CD8-positive, alpha-beta T cell (primary cell): ENCODE measurements at regions of chr2 and their contacts with region 1.

Region 1: DNA sequence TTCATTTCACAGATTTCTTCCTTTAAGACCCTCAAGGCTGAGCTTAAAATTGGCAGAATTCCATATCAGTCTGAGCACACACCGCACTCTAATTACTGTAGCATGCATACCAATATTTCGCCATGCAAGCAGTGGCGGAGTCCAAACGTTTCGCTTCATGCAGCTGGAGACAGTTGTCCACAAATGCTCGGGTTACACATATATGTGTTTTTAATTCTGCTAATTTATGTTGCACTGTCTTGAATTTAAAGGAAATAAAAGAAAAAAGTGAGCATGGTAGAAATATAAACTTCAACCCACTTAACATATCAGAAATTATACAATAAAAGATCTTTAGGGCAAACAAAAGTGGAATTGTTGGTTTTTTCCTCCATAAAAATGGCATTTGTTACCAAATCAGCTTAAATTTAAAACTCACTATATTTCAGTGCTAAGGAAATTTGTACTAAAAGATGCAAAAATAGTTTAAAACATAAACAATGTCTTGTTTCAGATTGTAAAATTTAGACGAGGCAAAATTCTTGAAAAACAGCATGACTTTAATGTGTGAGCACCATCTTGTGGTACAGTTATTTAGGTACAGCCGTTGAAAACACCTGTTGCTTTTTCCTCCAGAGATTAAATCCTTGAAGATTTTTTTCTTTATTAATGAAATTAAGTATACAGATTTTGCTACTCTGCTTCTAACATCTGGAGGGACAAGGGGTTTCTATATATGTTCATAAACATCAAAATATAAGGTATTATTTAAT is 24.1 kb upstream of the KANSL1L start:
- DNase-seq: peak in 2 of 9 experiments; percentile 62 to 71
- ATAC-seq: peak; percentile 48
- H3K4me3 ChIP-seq: no peak overlapping the region
- H3K4me3 Mint-ChIP-seq: no peak overlapping the region
- H3K27ac ChIP-seq: no peak overlapping the region
- H3K27ac Mint-ChIP-seq: no peak overlapping the region
- H3K4me1 ChIP-seq: no peaks in the 10 kb centered on the region
- H3K4me1 Mint-ChIP-seq: peaks cover 2% of the 10 kb centered on the region
- H3K27me3 ChIP-seq: no peaks in the 10 kb centered on the region
- H3K27me3 Mint-ChIP-seq: no peaks in the 10 kb centered on the region
- CTCF ChIP-seq: peak; percentile 81

Region 2: DNA sequence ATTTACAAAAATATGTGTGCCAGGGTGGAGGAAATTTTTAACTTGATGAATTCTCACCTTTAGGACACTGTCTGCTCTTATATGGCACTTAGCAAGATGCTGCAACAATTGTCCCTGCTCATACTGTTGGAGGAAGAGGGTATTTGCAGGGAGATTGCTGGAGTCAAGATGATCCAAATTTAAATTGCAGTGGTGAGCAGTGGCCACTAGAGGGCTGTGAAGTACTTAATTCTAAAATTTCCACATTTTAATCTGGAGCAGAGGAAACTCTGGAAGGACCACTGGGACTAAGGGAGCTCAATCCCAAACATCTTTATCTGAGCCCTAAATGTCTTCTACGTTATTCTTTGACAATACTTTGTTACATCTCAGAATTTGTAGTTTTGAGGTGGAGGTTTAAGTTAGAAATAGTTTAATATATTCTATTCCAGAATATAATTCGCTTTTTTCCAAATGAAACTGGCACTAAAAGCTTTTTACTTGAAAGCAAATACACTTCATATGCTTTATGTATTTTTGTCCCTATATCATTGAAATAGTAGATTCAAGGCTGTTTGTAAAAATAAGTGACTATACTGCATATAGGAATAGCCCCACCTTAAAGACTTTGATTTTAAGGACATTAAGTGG is 1821.7 kb before region 1 on chr2:
- CTCF ChIA-PET with region 1: no interaction called
- POLR2A ChIA-PET with region 1: no interaction called
- intact Hi-C with region 1: loop called in 1 of 2 experiments (anchors 5 kb)
- DNase-seq: peak in 3 of 9 experiments; percentile 24 to 44 (median 29)
- ATAC-seq: no peak
- H3K4me3 ChIP-seq: no peak overlapping the region
- H3K4me3 Mint-ChIP-seq: no peak overlapping the region
- H3K27ac ChIP-seq: no peak overlapping the region
- H3K27ac Mint-ChIP-seq: no peak overlapping the region
- H3K4me1 ChIP-seq: no peaks in the 10 kb centered on the region
- H3K4me1 Mint-ChIP-seq: no peaks in the 10 kb centered on the region
- H3K27me3 ChIP-seq: no peaks in the 10 kb centered on the region
- H3K27me3 Mint-ChIP-seq: peaks cover 10% of the 10 kb centered on the region
- CTCF ChIP-seq: peak; percentile 90

Region 3: DNA sequence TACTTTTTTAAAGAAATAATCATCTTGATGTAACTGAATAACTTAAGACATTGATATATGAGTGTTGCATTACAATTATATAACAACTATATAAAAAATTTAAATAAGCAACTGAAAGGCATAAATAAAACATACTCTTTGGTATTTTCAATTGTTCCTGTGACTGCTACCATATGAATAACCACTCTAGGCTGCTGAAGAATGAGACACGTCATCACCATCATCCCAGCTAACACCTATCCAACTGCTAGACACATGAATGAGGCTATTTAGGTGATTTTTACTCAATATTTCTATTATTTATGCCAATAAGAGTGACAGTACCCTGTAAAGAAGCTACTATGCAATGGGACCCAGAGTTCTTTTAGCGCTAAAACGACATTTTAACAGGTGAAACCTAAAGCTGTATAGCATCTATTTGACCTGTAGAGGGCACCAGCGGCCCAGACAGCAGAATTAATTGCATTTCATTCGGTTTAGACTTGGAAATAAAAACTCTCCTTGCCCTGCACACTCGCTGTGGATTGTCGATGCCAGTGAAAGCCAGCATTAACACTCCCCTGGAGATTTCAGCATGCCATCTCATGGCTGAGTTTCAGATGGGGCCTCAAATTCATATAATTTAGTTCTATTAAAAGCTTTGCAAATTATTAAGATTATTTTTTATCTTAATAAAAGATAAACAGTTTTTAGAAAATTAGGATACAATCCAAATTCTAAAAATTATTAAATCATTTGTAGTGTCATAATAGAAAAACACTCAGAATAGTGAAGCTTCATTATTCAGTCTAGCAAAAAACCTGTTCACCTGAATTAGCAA is 860.9 kb before region 1 on chr2:
- CTCF ChIA-PET with region 1: no interaction called
- POLR2A ChIA-PET with region 1: no interaction called
- intact Hi-C with region 1: loop called in 1 of 2 experiments (anchors 10 kb)
- DNase-seq: peak in 4 of 9 experiments; percentile 1 to 17 (median 10)
- ATAC-seq: no peak
- H3K4me3 ChIP-seq: no peak overlapping the region
- H3K4me3 Mint-ChIP-seq: no peak overlapping the region
- H3K27ac ChIP-seq: no peak overlapping the region
- H3K27ac Mint-ChIP-seq: no peak overlapping the region
- H3K4me1 ChIP-seq: no peaks in the 10 kb centered on the region
- H3K4me1 Mint-ChIP-seq: no peaks in the 10 kb centered on the region
- H3K27me3 ChIP-seq: no peaks in the 10 kb centered on the region
- H3K27me3 Mint-ChIP-seq: no peaks in the 10 kb centered on the region
- CTCF ChIP-seq: peak; percentile 36

Region 4: GRCh38 chr2:209977386-209978239 is 217.7 kb before region 1 on chr2:
- CTCF ChIA-PET with region 1: interaction called, 50 read pairs
- POLR2A ChIA-PET with region 1: no interaction called
- intact Hi-C with region 1: loop called (anchors 1 kb)
- DNase-seq: peak in 2 of 9 experiments; percentile 59 to 69
- ATAC-seq: peak; percentile 44
- H3K4me3 ChIP-seq: no peak overlapping the region
- H3K4me3 Mint-ChIP-seq: no peak overlapping the region
- H3K27ac ChIP-seq: no peak overlapping the region
- H3K27ac Mint-ChIP-seq: no peak overlapping the region
- H3K4me1 ChIP-seq: no peaks in the 10 kb centered on the region
- H3K4me1 Mint-ChIP-seq: no peaks in the 10 kb centered on the region
- H3K27me3 ChIP-seq: no peaks in the 10 kb centered on the region
- H3K27me3 Mint-ChIP-seq: peaks cover 5% of the 10 kb centered on the region
- CTCF ChIP-seq: peak; percentile 79

Region 5: DNA sequence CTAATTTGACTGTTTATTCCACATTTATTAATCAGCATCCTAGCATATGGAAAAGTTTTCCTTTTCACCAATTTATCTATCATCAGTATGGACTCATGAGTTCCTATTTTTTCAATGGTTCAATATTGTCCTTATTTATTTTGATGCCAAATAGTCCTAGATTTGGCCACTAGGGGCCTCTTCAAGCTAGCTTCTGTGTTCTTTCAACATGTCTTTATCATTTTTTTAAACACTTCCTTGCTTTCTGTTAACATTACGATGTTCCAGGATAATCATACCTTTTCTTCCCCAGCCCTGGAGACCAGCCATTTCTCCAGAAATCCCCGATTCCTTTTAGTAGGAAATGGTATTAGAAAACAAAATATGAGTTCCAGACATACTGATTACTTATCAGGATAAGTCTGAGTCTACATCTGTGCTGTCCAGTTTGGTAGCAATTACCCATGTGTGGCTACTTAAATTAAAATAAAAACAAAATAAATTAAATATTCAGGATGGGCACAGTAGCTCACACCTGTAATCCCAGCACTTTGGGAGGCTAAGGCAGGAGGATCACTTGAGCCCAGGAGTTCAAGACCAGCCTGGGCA is 122.3 kb before region 1 on chr2:
- CTCF ChIA-PET with region 1: interaction called, 5 read pairs
- POLR2A ChIA-PET with region 1: no interaction called
- intact Hi-C with region 1: loop called (anchors 1 to 5 kb)
- DNase-seq: peak in 2 of 9 experiments; percentile 8 to 14
- ATAC-seq: no peak
- H3K4me3 ChIP-seq: no peak overlapping the region
- H3K4me3 Mint-ChIP-seq: no peak overlapping the region
- H3K27ac ChIP-seq: no peak overlapping the region
- H3K27ac Mint-ChIP-seq: no peak overlapping the region
- H3K4me1 ChIP-seq: no peaks in the 10 kb centered on the region
- H3K4me1 Mint-ChIP-seq: peaks cover 1% of the 10 kb centered on the region
- H3K27me3 ChIP-seq: no peaks in the 10 kb centered on the region
- H3K27me3 Mint-ChIP-seq: peaks cover 2% of the 10 kb centered on the region
- CTCF ChIP-seq: peak; percentile 23

Region 6: DNA sequence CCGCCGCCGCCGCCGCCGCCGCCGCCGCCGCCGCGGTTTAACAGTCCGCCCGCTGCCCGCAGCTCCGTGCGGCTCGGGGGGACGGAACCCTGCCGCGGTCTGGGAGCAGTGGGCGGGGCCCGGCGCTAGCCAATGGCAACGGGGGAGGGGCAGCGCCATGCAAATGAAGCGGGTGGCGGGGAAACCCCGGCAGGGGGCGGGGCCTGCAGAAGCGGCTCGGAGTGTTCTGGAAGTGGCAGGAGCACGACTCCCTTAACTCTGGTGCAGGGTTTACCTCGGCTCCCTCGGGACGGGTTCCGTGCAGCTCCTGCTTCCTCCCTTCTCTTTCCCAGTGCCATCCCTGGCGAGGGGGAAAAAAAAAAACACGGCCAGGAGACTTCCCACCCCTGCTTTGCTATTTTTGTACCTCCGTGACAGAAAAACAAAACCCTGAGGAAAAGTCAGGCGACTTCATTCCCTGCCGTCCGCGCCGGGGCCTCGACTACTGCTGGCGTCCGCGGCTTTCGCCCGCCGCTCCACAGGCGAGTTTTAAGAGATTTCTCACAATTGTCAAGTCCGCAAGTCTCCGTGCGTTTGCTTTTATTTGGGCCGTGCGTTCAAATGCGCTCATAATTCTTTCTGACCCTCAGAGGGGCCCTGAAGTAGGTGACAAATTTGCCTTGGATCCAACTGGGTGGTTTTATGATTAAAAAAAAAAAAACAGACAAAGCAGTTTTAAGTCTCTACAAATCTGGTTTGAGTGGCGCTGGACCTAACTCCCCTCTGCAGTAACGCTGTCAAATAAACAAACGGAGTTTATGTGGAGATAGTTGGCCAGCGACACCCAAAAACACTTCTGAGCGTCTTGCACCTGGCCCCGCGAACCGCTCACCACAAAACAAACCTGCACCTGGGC is 23.7 kb before region 1 on chr2 and contains the start of gene KANSL1L:
- CTCF ChIA-PET with region 1: interaction called, 19 read pairs
- POLR2A ChIA-PET with region 1: no interaction called
- intact Hi-C with region 1: loop called in 1 of 2 experiments (anchors 1 kb)
- DNase-seq: peak; percentile 93 to 99 (median 97)
- ATAC-seq: peak; percentile 88
- H3K4me3 ChIP-seq: peak within 1 kb of the TSS; percentile 85 to 88
- H3K4me3 Mint-ChIP-seq: peak within 1 kb of the TSS; percentile 99
- H3K27ac ChIP-seq: peak within 1 kb of the TSS; percentile 80 to 91
- H3K27ac Mint-ChIP-seq: peak within 1 kb of the TSS; percentile 97
- H3K4me1 ChIP-seq: peaks cover 10% of the 10 kb centered on the region
- H3K4me1 Mint-ChIP-seq: peaks cover 31% of the 10 kb centered on the region
- H3K27me3 ChIP-seq: no peaks in the 10 kb centered on the region
- H3K27me3 Mint-ChIP-seq: no peaks in the 10 kb centered on the region
- CTCF ChIP-seq: no peak
- total RNA-seq, gene KANSL1L: 4.2 to 4.7 TPM

Region 7: GRCh38 chr2:210177769-210178168 is 17.5 kb before region 1 on chr2:
- CTCF ChIA-PET with region 1: interaction called, 19 read pairs
- POLR2A ChIA-PET with region 1: interaction called, 4 read pairs
- intact Hi-C with region 1: loop called in 1 of 2 experiments (anchors 1 kb)
- DNase-seq: no peak
- ATAC-seq: no peak
- H3K4me3 ChIP-seq: no peak overlapping the region
- H3K4me3 Mint-ChIP-seq: no peak overlapping the region
- H3K27ac ChIP-seq: no peak overlapping the region
- H3K27ac Mint-ChIP-seq: no peak overlapping the region
- H3K4me1 ChIP-seq: peaks cover 11% of the 10 kb centered on the region
- H3K4me1 Mint-ChIP-seq: peaks cover 24% of the 10 kb centered on the region
- H3K27me3 ChIP-seq: no peaks in the 10 kb centered on the region
- H3K27me3 Mint-ChIP-seq: no peaks in the 10 kb centered on the region
- CTCF ChIP-seq: no peak